ENCODE measurements at regions of chr3 and their contacts with region 1.

Region 1: DNA sequence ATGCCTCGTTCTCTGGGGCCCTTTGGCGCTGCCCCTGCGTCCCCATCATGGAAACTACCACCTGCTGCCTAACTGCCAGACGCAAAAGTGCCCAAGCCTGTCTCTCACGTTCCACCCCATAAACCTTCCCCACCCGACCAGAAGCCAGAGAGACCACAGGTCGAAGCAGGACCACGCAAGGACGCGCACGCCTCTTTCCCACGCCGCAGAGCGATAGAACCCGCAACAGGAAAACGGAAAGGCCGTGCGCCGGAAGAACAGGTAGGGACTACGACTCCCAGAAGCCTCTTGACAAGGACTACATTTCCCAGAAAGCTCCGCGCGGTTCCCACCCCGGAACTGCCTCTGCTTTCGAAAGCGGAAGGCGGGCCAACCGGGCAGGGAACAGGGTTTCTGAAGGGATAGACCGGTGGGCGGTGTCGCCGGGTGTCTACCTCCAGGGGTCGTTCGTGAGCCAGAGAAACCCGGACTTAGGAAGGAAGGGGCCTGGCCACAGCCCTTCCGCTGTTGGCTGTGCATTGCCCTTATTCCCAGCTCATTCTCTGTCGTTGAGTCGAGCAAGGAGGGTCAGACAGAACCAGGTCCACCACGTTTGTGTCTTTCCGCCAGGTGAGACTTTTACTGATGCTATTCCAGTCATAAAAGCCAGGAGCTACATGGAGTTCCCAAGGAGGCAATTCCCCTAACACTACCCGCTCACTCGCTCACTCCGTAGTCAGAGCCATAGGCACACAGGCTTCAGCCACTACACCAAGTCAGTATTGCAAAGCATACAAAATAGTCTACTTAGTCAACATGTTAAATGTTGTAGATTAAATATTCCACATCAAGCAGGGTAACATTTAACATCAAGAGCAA is 56.6 kb upstream of the ZBTB38 start:
- H3K4me3 ChIP-seq: peak overlapping the region; percentile 81
- H3K27ac ChIP-seq: no peak overlapping the region; the same call in 1 of the 2 replicates
- H3K4me1 ChIP-seq: no peaks in the 10 kb centered on the region
- CTCF ChIP-seq: peak; percentile 91

Region 2: DNA sequence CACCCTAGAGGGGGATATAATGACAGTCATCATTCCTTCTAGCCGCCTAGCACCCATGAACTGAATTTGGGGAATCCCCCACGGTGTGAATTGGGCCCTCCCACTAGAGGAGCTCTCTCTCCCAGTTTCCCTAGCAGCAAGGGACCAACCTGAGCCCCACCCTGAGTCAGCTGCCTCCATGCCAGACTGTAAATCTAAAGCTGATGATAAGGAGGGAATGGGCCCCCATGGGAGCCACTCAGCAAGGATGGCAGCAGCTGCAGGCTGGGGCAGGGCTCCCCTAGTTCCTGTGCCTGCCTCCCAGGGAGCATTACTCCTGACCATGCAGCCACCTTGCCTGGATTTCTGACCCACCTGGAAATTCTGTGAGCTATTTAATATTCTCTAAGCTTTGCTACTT is 137.1 kb before region 1 on chr3:
- CTCF ChIA-PET with region 1: no interaction called
- POLR2A ChIA-PET with region 1: no interaction called
- H3K4me3 ChIP-seq: no peak overlapping the region
- H3K27ac ChIP-seq: no peak overlapping the region
- H3K4me1 ChIP-seq: no peaks in the 10 kb centered on the region
- CTCF ChIP-seq: no peak

Region 3: DNA sequence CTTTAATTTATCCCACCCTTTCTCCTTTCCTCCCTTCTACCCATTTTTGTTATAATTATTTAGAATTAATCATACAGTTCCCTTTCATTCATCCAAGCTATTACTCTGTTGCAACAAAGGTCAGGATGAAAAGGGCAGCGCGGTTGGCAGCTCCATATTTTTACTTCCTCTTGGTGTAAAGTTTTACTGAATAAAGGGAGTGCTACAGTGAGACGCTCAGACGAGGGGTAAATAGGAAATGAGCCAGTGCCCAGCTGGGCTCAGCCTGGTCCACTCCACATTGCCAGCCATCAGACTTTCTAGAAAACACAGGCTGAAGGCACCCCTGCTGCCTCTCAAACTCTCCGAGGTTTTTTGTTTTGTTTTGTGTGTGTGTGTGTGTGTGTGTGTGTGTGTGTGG is 34.7 kb after region 1 on chr3:
- CTCF ChIA-PET with region 1: interaction called, 15 read pairs
- POLR2A ChIA-PET with region 1: no interaction called
- H3K4me3 ChIP-seq: no peak overlapping the region
- H3K27ac ChIP-seq: no peak overlapping the region
- H3K4me1 ChIP-seq: no peaks in the 10 kb centered on the region
- CTCF ChIP-seq: no peak

Region 4: DNA sequence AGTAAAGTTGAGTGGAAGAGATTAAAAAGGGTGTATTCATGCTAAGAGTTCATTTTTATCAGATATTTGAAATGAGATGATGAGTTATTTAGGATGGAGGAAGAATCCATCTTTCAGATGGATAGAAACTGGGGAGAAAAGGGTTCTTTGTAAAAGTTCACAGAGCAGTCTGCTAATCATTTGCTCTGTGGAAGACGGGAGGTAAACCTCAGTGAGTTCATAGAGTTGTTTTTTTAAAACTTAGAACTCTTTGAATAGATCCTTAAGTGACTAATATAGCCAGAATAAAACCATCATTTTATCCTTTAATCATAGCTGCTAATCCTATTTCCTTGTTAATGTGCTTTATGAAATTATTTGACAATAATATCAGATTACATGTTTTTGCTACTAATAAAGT is 180.2 kb after region 1 on chr3:
- CTCF ChIA-PET with region 1: no interaction called
- POLR2A ChIA-PET with region 1: no interaction called
- H3K4me3 ChIP-seq: no peak overlapping the region
- H3K27ac ChIP-seq: no peak overlapping the region
- H3K4me1 ChIP-seq: peaks cover 7% of the 10 kb centered on the region
- CTCF ChIP-seq: no peak

Measured in HEK293 (cell line).